ENCODE measurements at regions of chr15 and their contacts with region 1.

Region 1: GRCh38 chr15:55685286-55685685 is 57.7 kb downstream of the PRTG start:
- DNase-seq: no peak
- ATAC-seq: no peak
- H3K4me3 ChIP-seq: no peak overlapping the region
- H3K27ac ChIP-seq: no peak overlapping the region
- H3K4me1 ChIP-seq: no peaks in the 10 kb centered on the region
- H3K27me3 ChIP-seq: no peaks in the 10 kb centered on the region
- CTCF ChIP-seq: no peak
- EP300 ChIP-seq: no peak
- POLR2A ChIP-seq: no peak
- RAD21 ChIP-seq: no peak

Region 2: GRCh38 chr15:55669270-55669669 is 16.0 kb before region 1 on chr15:
- CTCF ChIA-PET with region 1: no interaction called
- POLR2A ChIA-PET with region 1: no interaction called
- in situ Hi-C with region 1: no loop called
- intact Hi-C with region 1: no loop called
- DNase-seq: no peak
- ATAC-seq: no peak
- H3K4me3 ChIP-seq: no peak overlapping the region
- H3K27ac ChIP-seq: no peak overlapping the region
- H3K4me1 ChIP-seq: no peaks in the 10 kb centered on the region
- H3K27me3 ChIP-seq: no peaks in the 10 kb centered on the region
- CTCF ChIP-seq: no peak
- EP300 ChIP-seq: no peak
- POLR2A ChIP-seq: no peak
- RAD21 ChIP-seq: no peak

Region 3: DNA sequence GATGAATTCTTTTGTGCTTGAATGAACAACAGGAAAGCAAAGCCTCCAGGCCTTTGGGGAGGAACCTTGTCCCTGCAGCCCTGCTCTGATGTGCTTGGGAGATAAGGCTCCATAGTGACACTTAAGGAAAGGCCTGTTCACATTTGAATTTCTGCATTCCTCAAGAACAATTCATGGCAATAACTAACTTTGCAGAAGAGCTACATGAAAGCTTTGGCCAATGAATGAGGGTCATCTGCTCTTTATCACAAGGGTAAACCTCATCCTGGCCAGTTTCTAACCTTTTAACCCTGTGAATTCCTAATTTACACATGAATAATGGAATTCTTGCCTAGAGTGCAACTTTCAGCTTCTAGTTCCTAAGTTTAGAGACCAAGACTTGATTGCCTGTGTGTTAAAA is 52.1 kb after region 1 on chr15:
- CTCF ChIA-PET with region 1: no interaction called
- POLR2A ChIA-PET with region 1: no interaction called
- in situ Hi-C with region 1: no loop called
- intact Hi-C with region 1: loop called (anchors 10 kb)
- DNase-seq: no peak
- ATAC-seq: no peak
- H3K4me3 ChIP-seq: no peak overlapping the region
- H3K27ac ChIP-seq: no peak overlapping the region
- H3K4me1 ChIP-seq: peaks cover 40% of the 10 kb centered on the region
- H3K27me3 ChIP-seq: no peaks in the 10 kb centered on the region
- CTCF ChIP-seq: no peak
- EP300 ChIP-seq: no peak
- POLR2A ChIP-seq: no peak
- RAD21 ChIP-seq: no peak